Gastrocnemius medialis (tissue), 4 donors: ENCODE measurements at regions of chr1 and their contacts with region 1.

Region 1: GRCh38 chr1:39204441-39205081 is at the start of gene MACF1:
- DNase-seq: peak; percentile 29 to 48
- ATAC-seq: peak; percentile 81 to 83
- H3K4me3 ChIP-seq: peak within 1 kb of the TSS; percentile 19 to 46 (median 32)
- H3K27ac ChIP-seq: peak within 1 kb of the TSS; percentile 76 to 88 (median 83)
- H3K4me1 ChIP-seq: peaks cover 22 to 23% of the 10 kb centered on the region in 2 donors
- H3K27me3 ChIP-seq: no peaks in the 10 kb centered on the region
- CTCF ChIP-seq: peak in 2 of 5 experiments; percentile 14 to 40
- POLR2A ChIP-seq: peak; percentile 27 to 52
- total RNA-seq, gene MACF1: 78.7 to 139 (median 113) TPM

Region 2: DNA sequence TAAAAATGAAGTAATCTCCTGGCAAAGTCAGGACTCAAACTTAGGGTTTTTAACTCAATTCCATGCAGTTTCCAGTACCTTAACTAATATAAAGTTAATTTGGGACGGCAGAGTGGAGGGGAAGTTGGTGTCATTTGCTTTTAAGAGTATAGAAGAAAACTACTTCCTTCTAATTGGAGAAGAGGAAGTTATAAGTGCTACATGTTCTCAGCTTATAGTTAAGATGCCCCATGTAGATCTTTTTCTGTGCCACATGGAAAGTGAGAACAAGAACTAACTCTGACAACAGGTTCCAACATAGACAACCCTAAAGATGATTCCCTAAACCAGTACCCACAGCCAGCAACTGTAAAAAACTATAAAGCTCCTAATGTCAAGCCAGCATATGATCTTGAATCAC is 356.5 kb before region 1 on chr1:
- in situ Hi-C with region 1: no loop called
- intact Hi-C with region 1: no loop called
- DNase-seq: no peak
- ATAC-seq: no peak
- H3K4me3 ChIP-seq: no peak overlapping the region
- H3K27ac ChIP-seq: no peak overlapping the region
- H3K4me1 ChIP-seq: no peaks in the 10 kb centered on the region
- H3K27me3 ChIP-seq: no peaks in the 10 kb centered on the region
- CTCF ChIP-seq: no peak
- POLR2A ChIP-seq: no peak

Region 3: GRCh38 chr1:39268112-39268581 is 63.6 kb after region 1 on chr1:
- in situ Hi-C with region 1: loop called in 2 of 4 experiments (anchors 10 kb)
- intact Hi-C with region 1: no loop called
- DNase-seq: peak in 1 of 2 donors; percentile 14
- ATAC-seq: peak; percentile 28 to 68
- H3K4me3 ChIP-seq: peak overlapping the region; percentile 34 to 50 (median 43)
- H3K27ac ChIP-seq: peak overlapping the region; percentile 49 to 76 (median 70)
- H3K4me1 ChIP-seq: peaks cover 54% of the 10 kb centered on the region in 2 donors
- H3K27me3 ChIP-seq: no peaks in the 10 kb centered on the region
- CTCF ChIP-seq: no peak
- POLR2A ChIP-seq: no peak